ENCODE measurements at regions of chr11 and their contacts with region 1.

Region 1: GRCh38 chr11:12430955-12431354 is 53.6 kb downstream of the PARVA start:
- DNase-seq: peak; percentile 51 to 90
- H3K4me3 ChIP-seq: peak overlapping the region in 1 of 2 donors; percentile 29
- H3K27ac ChIP-seq: peak overlapping the region; percentile 89 to 92
- H3K4me1 ChIP-seq: peaks cover 26 to 50% of the 10 kb centered on the region in 2 donors
- H3K27me3 ChIP-seq: no peaks in the 10 kb centered on the region
- CTCF ChIP-seq: no peak

Region 2: GRCh38 chr11:12411806-12412727 is 18.9 kb before region 1 on chr11:
- intact Hi-C with region 1: loop called (anchors 1 kb)
- DNase-seq: peak in 1 of 2 donors; percentile 89
- H3K4me3 ChIP-seq: no peak overlapping the region
- H3K27ac ChIP-seq: peak overlapping the region; percentile 85
- H3K4me1 ChIP-seq: peaks cover 12 to 41% of the 10 kb centered on the region in 2 donors
- H3K27me3 ChIP-seq: no peaks in the 10 kb centered on the region
- CTCF ChIP-seq: peak; percentile 69 to 75 (median 69)

Measured in ascending aorta (tissue), 2 donors.